ENCODE measurements at regions of chr3 and their contacts with region 1.

Region 1: GRCh38 chr3:71583566-71584449 is at the start of gene FOXP1:
- H3K4me3 Mint-ChIP-seq: peak within 1 kb of the TSS; percentile 96
- H3K27ac Mint-ChIP-seq: peak within 1 kb of the TSS; percentile 99
- H3K4me1 Mint-ChIP-seq: peaks cover 20% of the 10 kb centered on the region
- H3K27me3 Mint-ChIP-seq: no peaks in the 10 kb centered on the region

Region 2: DNA sequence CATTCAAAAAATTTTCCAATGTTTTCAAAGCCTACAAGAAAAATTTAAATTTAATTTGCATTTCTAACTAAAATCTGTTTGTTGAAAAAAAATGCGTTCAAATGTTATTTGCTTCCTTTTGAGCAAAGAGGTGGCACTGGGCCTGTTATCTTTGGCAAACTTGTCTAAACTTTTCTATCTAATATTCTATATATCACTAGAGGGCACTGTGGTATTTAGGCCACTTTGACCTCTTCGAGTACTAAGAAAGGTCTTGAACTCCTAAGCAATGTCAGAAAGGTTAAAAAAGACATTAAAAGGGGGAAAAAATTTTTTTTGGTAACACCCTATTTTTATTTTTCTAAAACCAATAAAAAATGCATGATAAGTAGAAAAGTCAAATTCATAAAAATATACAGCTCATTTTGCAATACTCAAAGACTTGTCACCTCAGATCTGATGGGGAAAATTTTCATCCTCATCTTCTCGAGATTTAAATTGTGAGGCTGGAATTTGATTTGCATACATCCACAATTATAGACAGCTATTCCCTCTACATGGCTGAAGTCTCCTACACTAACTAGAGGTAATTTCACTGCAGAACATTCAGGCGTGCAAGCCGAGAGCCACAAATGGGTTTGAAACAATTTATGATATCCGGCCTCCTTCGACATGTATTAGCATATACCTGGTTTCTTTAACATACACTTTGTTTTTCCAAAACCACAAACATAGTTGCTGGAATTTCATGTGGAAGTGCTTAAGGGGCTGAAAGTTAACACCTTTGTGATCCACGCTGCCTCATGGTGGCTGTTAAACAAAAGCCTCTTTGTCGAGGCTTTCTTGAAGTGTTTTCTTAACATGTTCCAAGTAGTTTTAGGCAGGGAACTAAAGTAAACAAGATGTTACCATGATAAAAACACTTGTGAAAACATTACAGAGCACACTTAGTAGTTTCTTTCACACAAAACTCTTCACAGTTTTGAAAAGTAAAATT is 576.7 kb before region 1 on chr3:
- intact Hi-C with region 1: loop called (anchors 1 kb)
- H3K4me3 Mint-ChIP-seq: no peak overlapping the region
- H3K27ac Mint-ChIP-seq: no peak overlapping the region
- H3K4me1 Mint-ChIP-seq: peaks cover 6% of the 10 kb centered on the region
- H3K27me3 Mint-ChIP-seq: no peaks in the 10 kb centered on the region

Region 3: DNA sequence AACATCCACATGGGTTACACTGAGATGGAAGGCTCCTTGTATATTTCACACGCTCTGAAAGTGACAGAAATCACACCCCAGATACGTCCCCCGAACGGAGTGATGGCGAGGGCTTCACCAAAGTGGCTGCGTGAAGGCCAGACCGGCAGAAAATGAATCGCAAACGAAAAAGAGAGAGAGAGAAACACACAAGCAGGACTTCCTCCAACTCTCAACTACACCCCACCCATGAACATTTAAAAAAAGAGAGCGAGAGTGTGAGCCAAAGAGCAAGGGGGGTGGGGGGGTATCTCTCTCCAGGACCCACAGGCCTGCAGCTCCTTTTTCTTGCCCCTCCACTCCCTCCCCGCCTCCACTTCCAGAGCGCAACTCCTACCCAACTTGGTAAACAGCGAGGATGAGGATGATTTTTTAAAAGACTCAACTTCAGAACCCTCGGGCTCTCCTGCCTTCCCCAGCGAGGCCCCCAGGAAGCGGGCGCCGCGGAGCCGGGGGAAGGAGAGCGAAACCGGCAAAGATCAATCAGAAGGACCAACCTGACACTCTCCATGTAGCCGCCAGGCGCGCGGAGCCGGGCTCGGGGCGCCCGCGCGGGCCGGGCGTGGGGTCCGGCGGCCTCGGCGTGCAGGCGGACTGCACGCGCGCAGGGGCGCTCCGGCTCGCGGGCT is 519.4 kb before region 1 on chr3:
- intact Hi-C with region 1: loop called (anchors 2 kb)
- H3K4me3 Mint-ChIP-seq: no peak overlapping the region
- H3K27ac Mint-ChIP-seq: no peak overlapping the region
- H3K4me1 Mint-ChIP-seq: peaks cover 11% of the 10 kb centered on the region
- H3K27me3 Mint-ChIP-seq: peaks cover 2% of the 10 kb centered on the region

Region 4: GRCh38 chr3:71389911-71390573 is 193.8 kb before region 1 on chr3:
- intact Hi-C with region 1: loop called (anchors 2 kb)
- H3K4me3 Mint-ChIP-seq: peak overlapping the region; percentile 50
- H3K27ac Mint-ChIP-seq: peak overlapping the region; percentile 86
- H3K4me1 Mint-ChIP-seq: peaks cover 48% of the 10 kb centered on the region
- H3K27me3 Mint-ChIP-seq: no peaks in the 10 kb centered on the region

Region 5: DNA sequence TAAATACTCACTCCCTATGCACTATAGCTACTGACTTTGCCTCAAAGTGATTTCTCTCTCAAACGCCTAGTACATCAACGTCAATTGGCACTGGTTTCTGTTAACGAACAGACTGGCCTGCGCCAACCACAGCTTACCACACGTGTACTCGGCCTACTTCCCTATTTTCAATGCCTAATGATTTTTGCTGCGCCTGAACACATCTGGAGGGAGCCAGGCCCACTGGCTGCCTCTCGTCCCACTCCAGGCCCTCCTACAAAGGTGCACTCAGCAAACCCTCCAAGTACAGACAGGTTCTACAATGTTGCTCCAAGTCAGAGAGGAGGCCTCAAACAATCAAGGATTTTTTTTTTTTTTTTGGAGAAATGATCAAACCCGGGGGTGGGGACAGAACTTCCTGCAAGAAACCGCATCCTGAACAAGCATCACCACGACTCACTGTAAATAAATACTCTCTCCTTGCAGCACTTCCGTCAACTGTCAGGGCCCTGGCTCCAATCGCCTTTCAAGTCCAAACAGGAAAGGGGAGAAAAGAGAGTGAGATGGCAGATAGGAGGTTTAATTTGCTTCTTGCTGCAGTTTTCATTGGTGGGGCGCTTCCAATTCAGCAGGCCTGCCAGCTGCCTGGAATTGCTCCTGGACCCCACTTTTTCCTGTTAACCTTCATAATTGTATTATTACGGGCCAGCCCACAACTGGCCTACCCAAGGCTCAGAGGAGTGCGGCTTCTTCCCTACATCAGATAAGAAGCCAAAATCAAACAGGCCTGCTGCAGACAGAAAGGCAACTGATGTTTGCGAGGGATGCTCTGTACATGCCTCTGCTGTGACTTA is 139.6 kb before region 1 on chr3:
- intact Hi-C with region 1: loop called (anchors 2 kb)
- H3K4me3 Mint-ChIP-seq: peak overlapping the region; percentile 57
- H3K27ac Mint-ChIP-seq: peak overlapping the region; percentile 98
- H3K4me1 Mint-ChIP-seq: peaks cover 77% of the 10 kb centered on the region
- H3K27me3 Mint-ChIP-seq: no peaks in the 10 kb centered on the region

Region 6: DNA sequence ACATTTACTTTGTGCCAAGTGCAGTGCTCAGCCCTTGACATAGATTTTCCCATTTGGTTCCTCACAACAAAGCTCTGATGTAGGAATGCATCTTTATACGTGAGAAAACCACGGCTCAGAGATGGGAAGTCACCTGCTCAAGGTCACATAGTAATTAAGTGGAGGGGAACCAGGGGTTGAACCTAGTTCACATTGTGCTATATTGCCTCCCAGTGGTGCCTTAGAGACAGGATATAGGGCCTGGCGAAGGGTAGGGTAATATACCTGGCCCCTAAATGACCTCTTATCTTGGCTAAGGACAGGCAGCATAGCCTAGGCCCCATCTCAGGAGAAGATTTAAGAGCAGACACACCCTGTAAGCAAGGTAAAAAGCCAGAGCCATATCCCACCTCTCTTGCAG is 71.8 kb before region 1 on chr3:
- intact Hi-C with region 1: loop called (anchors 5 kb)
- H3K4me3 Mint-ChIP-seq: no peak overlapping the region
- H3K27ac Mint-ChIP-seq: no peak overlapping the region
- H3K4me1 Mint-ChIP-seq: peaks cover 14% of the 10 kb centered on the region
- H3K27me3 Mint-ChIP-seq: no peaks in the 10 kb centered on the region

Region 7: DNA sequence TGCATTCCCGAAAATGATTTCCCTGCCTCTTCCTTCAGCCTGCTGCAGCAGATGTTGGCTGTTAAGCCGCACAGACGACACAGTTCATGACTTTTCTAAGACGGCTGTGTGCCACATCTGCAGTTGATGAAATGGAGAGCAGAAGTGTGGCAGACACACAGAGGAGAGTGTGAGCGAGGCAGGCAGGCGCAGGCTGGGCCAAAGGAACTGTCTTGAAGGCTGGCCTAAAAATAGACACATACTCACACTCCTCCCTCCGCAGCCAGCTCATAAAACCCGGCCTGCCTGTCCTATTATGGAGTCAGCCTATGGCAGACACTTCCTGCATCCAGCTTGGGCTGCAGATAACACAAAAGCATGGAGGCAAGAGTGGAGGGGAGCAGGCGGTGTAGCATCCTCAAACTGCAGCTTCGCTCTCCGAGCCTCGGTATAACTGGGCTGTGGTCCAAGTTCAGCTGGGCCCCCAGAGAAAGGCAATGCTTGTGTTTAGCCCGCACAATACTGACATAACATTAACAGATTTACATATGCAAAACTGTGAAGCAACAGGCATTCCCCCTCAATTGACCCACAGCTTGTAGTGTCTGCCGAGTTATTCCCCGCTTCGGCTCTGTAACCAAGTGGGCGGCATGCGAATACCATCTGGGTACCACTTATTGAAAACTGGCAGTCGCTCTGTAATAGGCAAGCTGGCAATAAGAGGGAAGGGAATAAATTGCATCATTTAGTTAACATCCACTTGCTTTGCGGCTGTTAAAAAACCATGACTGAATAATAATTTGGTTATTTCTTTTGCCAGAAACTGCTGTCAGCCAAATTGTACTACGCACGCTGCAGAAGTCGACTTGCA is 41.1 kb before region 1 on chr3:
- intact Hi-C with region 1: loop called (anchors 5 kb)
- H3K4me3 Mint-ChIP-seq: peak overlapping the region; percentile 62
- H3K27ac Mint-ChIP-seq: peak overlapping the region; percentile 88
- H3K4me1 Mint-ChIP-seq: peaks cover 39% of the 10 kb centered on the region
- H3K27me3 Mint-ChIP-seq: no peaks in the 10 kb centered on the region

Region 8: DNA sequence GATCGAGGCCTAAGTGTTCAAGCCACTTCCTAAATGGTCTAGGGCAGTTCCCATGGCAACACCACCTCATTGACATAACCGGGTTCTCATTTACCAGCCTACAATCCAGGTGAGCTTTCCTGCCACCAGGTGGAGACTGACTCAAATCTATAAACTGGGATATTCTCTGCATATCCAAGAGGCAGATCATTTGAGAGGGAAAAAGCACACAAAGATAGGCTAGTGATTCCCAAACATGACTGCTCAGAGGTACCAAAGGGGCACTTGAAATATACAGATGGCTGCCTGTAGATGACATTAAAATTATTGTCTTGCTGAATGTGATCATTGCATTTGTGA is 342.4 kb after region 1 on chr3:
- intact Hi-C with region 1: no loop called
- H3K4me3 Mint-ChIP-seq: no peak overlapping the region
- H3K27ac Mint-ChIP-seq: no peak overlapping the region
- H3K4me1 Mint-ChIP-seq: peaks cover 5% of the 10 kb centered on the region
- H3K27me3 Mint-ChIP-seq: peaks cover 83% of the 10 kb centered on the region

Measured in dendritic cell treated with granulocyte-macrophage colony-stimulating factor and Interleukin-4, amounts not matched to agents 40 ng/mL and 50 ng/mL, for 4 days (primary cell).